SK-N-SH (cell line): ENCODE measurements at regions of chr2 and their contacts with region 1.

Region 1: DNA sequence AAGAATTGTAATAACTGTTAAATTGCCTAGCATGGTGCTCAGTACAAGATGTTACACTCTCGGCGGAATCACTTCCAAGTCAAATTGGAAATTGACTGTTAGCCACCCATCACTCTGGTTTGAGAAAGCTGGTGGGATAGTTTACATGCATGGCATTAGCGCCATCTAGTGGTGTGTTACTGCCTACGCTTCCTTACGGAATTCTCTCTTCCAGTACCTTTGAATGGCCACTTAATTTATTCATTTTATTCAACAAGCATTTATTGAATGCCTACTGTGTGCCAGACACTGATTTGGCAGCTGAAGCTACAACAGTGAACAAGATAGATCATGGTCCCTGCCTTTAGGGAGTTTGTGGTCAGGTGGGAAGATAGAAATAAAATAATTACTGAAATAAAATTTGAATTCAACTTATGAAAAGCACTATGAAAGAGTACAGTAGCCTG is 171.2 kb downstream of the TMEM247 start:
- DNase-seq: peak; percentile 71
- H3K4me3 ChIP-seq: no peak overlapping the region; a peak in 1 of 4 replicates
- H3K27ac ChIP-seq: no peak overlapping the region
- H3K4me1 ChIP-seq: peaks cover 15 to 19% of the 10 kb centered on the region in 2 experiments
- H3K27me3 ChIP-seq: no peaks in the 10 kb centered on the region
- CTCF ChIP-seq: peak; percentile 99
- EP300 ChIP-seq: no peak
- RAD21 ChIP-seq: peak; percentile 99

Region 2: GRCh38 chr2:45993476-45993991 is 657.0 kb before region 1 on chr2:
- CTCF ChIA-PET with region 1: interaction called, 24 read pairs
- POLR2A ChIA-PET with region 1: no interaction called
- DNase-seq: peak; percentile 70
- H3K4me3 ChIP-seq: no peak overlapping the region; a peak in 1 of 4 replicates
- H3K27ac ChIP-seq: no peak overlapping the region
- H3K4me1 ChIP-seq: peaks cover 0 to 5% of the 10 kb centered on the region in 2 experiments; a peak in 1 of 4 replicates
- H3K27me3 ChIP-seq: no peaks in the 10 kb centered on the region
- CTCF ChIP-seq: peak; percentile 94
- EP300 ChIP-seq: no peak
- RAD21 ChIP-seq: peak; percentile 93

Region 3: DNA sequence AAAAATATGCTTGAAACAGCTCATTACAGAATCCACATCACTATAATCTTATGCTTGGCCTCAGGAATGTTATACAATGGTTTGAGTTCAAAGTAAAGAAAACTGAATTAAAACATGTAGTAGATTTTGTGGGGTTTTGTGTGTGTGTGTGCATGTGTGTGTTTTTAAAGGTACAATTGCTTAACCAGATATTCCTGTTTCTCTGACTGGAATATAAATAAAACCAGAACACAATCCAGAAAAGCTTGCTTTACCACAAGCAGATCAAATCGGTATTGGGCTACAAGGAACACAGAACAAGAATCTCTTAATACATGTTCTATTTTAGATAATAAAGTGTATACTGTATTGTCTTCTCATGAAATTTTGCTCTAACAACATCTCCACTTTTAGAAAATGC is 61.2 kb before region 1 on chr2:
- CTCF ChIA-PET with region 1: interaction called, 12 read pairs
- POLR2A ChIA-PET with region 1: no interaction called
- DNase-seq: no peak
- H3K4me3 ChIP-seq: no peak overlapping the region
- H3K27ac ChIP-seq: no peak overlapping the region
- H3K4me1 ChIP-seq: peaks cover 0 to 9% of the 10 kb centered on the region in 2 experiments; a peak in 1 of 4 replicates
- H3K27me3 ChIP-seq: no peaks in the 10 kb centered on the region
- CTCF ChIP-seq: no peak
- EP300 ChIP-seq: no peak
- RAD21 ChIP-seq: no peak

Region 4: DNA sequence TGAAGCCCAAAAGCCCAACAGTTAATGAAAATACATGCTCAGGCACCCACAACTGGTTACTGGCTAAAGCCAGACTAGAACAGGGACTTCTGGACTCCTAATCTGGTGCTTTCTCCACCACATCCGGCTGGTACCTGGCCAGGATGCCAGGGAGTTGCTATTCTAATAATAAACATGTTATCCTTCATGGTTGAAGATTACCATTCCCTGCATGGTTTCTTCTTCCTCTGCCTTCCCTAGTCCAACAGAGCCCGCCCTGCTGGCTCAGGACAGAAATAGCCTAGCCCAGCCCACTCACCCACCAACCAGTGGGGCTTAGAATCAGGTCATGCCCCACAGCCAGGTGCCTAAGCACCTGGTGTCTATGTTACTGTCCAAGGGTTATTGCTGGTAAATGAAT is 13.0 kb after region 1 on chr2:
- CTCF ChIA-PET with region 1: interaction called, 20 read pairs
- POLR2A ChIA-PET with region 1: no interaction called
- DNase-seq: no peak
- H3K4me3 ChIP-seq: no peak overlapping the region
- H3K27ac ChIP-seq: no peak overlapping the region
- H3K4me1 ChIP-seq: peaks cover 4 to 12% of the 10 kb centered on the region in 2 experiments; a peak in 2 of 4 replicates
- H3K27me3 ChIP-seq: no peaks in the 10 kb centered on the region
- CTCF ChIP-seq: no peak
- EP300 ChIP-seq: no peak
- RAD21 ChIP-seq: no peak

Region 5: DNA sequence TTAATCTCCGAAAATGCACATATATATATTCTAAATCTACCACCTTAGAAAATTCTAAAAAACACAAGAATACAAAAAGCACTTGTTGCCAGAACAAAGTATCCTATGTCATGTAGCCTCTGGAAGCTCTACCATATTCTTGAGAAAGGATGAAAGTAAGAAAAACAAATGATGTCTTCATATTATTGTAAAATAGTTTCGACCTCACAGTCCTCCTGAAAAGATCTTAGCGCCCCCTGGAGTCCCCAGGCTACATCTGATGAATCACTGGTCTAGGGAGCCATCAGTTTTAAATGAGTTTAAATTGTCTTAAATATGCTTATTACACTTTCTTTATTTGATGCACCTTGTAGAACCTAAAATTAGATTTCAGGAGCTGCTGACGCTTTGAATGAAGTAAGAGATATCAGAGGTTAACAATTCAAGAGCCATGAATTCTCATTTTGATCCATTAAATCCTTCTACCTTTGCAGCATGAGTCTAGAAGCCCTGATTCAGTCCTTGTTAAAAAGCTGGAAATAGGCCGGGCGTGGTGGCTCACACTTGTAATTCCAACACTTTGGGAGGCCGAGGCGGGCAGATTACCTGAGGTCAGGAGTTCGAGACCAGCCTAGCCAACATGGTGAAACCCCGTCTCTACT is 126.2 kb after region 1 on chr2:
- CTCF ChIA-PET with region 1: interaction called, 53 read pairs
- POLR2A ChIA-PET with region 1: no interaction called
- DNase-seq: peak; percentile 71
- H3K4me3 ChIP-seq: no peak overlapping the region
- H3K27ac ChIP-seq: peak overlapping the region in 1 of 2 experiments; percentile 60; a peak in 1 of 4 replicates
- H3K4me1 ChIP-seq: peaks cover 7 to 37% of the 10 kb centered on the region in 2 experiments; a peak in 2 of 4 replicates
- H3K27me3 ChIP-seq: no peaks in the 10 kb centered on the region
- CTCF ChIP-seq: peak; percentile 94
- EP300 ChIP-seq: no peak
- RAD21 ChIP-seq: peak; percentile 80

Region 6: GRCh38 chr2:46876741-46877384 is 226.3 kb after region 1 on chr2:
- CTCF ChIA-PET with region 1: interaction called, 20 read pairs
- POLR2A ChIA-PET with region 1: no interaction called
- DNase-seq: peak; percentile 73
- H3K4me3 ChIP-seq: no peak overlapping the region
- H3K27ac ChIP-seq: peak overlapping the region; percentile 7 to 76
- H3K4me1 ChIP-seq: peaks cover 35 to 38% of the 10 kb centered on the region in 2 experiments; a peak in 3 of 4 replicates
- H3K27me3 ChIP-seq: no peaks in the 10 kb centered on the region
- CTCF ChIP-seq: peak; percentile 80
- EP300 ChIP-seq: no peak
- RAD21 ChIP-seq: peak; percentile 91

Region 7: GRCh38 chr2:47002480-47003381 is 352.2 kb after region 1 on chr2:
- CTCF ChIA-PET with region 1: no interaction called
- POLR2A ChIA-PET with region 1: no interaction called
- DNase-seq: peak; percentile 90
- H3K4me3 ChIP-seq: no peak overlapping the region
- H3K27ac ChIP-seq: peak overlapping the region; percentile 37 to 99; a peak in 3 of 4 replicates
- H3K4me1 ChIP-seq: peaks cover 9 to 87% of the 10 kb centered on the region in 2 experiments
- H3K27me3 ChIP-seq: no peaks in the 10 kb centered on the region
- CTCF ChIP-seq: no peak
- EP300 ChIP-seq: peak in 1 of 2 experiments; percentile 27; a peak in 1 of 4 replicates
- RAD21 ChIP-seq: no peak